ENCODE measurements at regions of chr1 and their contacts with region 1.

Region 1: GRCh38 chr1:226444901-226445300 is 37.0 kb upstream of the PARP1 start:
- DNase-seq: peak; percentile 90
- ATAC-seq: peak; percentile 100
- H3K4me3 Mint-ChIP-seq: peak overlapping the region; percentile 2
- H3K27ac Mint-ChIP-seq: peak overlapping the region; percentile 50
- H3K4me1 Mint-ChIP-seq: peaks cover 32% of the 10 kb centered on the region
- H3K27me3 Mint-ChIP-seq: peaks cover 45% of the 10 kb centered on the region

Region 2: DNA sequence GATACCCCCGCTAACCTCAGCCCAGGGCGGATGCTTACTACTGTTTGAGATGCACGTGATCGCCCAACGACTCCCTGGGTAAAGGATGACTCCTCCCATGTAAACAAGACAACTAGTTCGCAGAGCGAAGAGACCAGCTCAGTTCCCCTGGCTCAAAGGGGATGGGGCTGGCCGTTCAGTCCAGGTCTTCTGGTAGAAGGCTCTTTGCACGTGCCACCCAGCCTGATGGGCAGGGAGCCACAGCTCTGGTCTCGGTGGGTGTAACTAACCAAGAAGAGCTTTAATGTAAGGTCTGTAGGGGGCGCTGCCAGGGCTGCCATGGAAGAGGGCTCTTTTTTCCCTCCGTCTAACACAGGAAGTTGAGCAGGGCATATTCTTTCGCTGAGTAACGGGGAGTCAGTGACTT is 12.4 kb after region 1 on chr1:
- CTCF ChIA-PET with region 1: interaction called, 36 read pairs
- POLR2A ChIA-PET with region 1: interaction called, 4 read pairs
- DNase-seq: peak; percentile 61
- ATAC-seq: peak; percentile 86
- H3K4me3 Mint-ChIP-seq: peak overlapping the region; percentile 68
- H3K27ac Mint-ChIP-seq: peak overlapping the region; percentile 77
- H3K4me1 Mint-ChIP-seq: peaks cover 15% of the 10 kb centered on the region
- H3K27me3 Mint-ChIP-seq: peaks cover 25% of the 10 kb centered on the region